H1 (cell line): ENCODE measurements at regions of chr5 and their contacts with region 1.

Region 1: GRCh38 chr5:173163219-173163618 is 18.9 kb downstream of the BNIP1 start:
- DNase-seq: no peak
- H3K4me3 ChIP-seq: no peak overlapping the region
- H3K27ac ChIP-seq: no peak overlapping the region
- H3K4me1 ChIP-seq: no peaks in the 10 kb centered on the region
- H3K27me3 ChIP-seq: no peaks in the 10 kb centered on the region
- CTCF ChIP-seq: peak in 2 of 3 experiments; percentile 9 to 28; a peak in 2 of 4 replicates
- EP300 ChIP-seq: no peak
- POLR2A ChIP-seq: no peak
- RAD21 ChIP-seq: peak in 1 of 2 experiments; percentile 42; a peak in 2 of 4 replicates

Region 2: DNA sequence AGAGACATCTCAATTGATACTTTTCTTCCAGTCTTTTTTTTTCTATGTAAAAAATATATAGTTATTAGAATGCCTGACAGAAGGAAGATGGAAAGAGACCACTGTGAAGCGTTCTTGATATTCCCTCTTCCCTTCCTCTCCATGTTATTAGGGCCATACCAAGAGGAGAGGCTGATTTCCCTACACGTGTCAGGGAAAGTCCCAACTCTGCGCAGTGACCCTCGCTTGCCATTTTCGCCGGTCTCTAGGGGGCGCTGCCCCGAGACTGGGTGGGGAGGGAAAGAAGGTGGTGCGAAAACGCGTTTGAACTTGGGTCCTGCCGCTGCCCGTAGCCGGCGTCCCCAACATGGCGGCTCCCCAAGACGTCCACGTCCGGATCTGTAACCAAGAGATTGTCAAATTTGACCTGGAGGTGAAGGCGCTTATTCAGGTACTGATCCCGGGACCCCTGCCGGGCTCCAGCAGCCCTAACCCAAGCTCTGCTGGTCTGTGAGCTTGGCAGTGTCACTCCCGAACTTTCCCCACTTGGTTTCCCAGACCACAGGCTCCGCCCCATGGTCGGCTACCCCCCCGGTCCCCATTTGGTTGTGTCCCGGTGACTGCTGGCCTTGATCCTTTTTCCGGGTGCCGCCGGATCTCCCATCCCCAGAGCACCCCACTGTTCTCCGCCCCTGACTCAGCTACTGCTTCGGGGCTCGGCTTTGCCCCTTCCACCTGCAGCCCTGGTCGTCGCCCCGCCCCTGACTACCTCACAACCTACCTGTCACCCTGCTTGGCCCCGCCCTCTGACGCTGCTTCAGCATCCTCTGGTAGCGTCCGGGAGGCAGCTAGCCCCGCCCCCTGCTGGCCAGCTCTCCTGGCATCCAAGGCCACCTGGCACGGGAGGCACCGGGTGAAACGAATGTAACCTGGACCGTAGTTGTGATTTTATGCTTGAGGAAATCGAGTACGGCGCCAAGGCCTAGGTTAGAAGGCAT is 18.7 kb before region 1 on chr5 and contains the start of gene BNIP1:
- CTCF ChIA-PET with region 1: interaction called, 15 read pairs
- POLR2A ChIA-PET with region 1: no interaction called
- DNase-seq: peak; percentile 87 to 99
- H3K4me3 ChIP-seq: peak within 1 kb of the TSS; percentile 58 to 97 (median 94)
- H3K27ac ChIP-seq: peak within 1 kb of the TSS; percentile 60
- H3K4me1 ChIP-seq: peaks cover 4 to 9% (median 6%) of the 10 kb centered on the region in 4 experiments; a peak in 6 of 7 replicates
- H3K27me3 ChIP-seq: no peaks in the 10 kb centered on the region
- CTCF ChIP-seq: peak; percentile 88 to 98 (median 92)
- EP300 ChIP-seq: peak in 1 of 2 experiments; percentile 89; a peak in 2 of 3 replicates
- POLR2A ChIP-seq: peak in 1 of 2 experiments; percentile 63; a peak in 2 of 3 replicates
- RAD21 ChIP-seq: peak; percentile 58 to 66
- total RNA-seq, gene BNIP1: 11.8 and 13.5 TPM in 2 replicates

Region 3: GRCh38 chr5:173187054-173187789 is 24.0 kb after region 1 on chr5:
- CTCF ChIA-PET with region 1: interaction called, 44 read pairs
- POLR2A ChIA-PET with region 1: no interaction called
- DNase-seq: peak; percentile 19 to 59
- H3K4me3 ChIP-seq: no peak overlapping the region
- H3K27ac ChIP-seq: no peak overlapping the region
- H3K4me1 ChIP-seq: peaks cover 0 to 4% (median 0%) of the 10 kb centered on the region in 4 experiments; a peak in 1 of 7 replicates
- H3K27me3 ChIP-seq: no peaks in the 10 kb centered on the region
- CTCF ChIP-seq: peak; percentile 43 to 46 (median 43)
- EP300 ChIP-seq: no peak
- POLR2A ChIP-seq: no peak
- RAD21 ChIP-seq: peak; percentile 12 to 36; a peak in 2 of 4 replicates

Region 4: GRCh38 chr5:173201636-173202276 is 38.5 kb after region 1 on chr5:
- CTCF ChIA-PET with region 1: interaction called, 29 read pairs
- POLR2A ChIA-PET with region 1: no interaction called
- DNase-seq: peak in 1 of 2 experiments; percentile 17
- H3K4me3 ChIP-seq: no peak overlapping the region
- H3K27ac ChIP-seq: no peak overlapping the region
- H3K4me1 ChIP-seq: peaks cover 0 to 5% (median 2%) of the 10 kb centered on the region in 4 experiments; a peak in 3 of 7 replicates
- H3K27me3 ChIP-seq: peaks cover 0 to 2% (median 0%) of the 10 kb centered on the region in 4 experiments; a peak in 1 of 7 replicates
- CTCF ChIP-seq: no peak
- EP300 ChIP-seq: no peak
- POLR2A ChIP-seq: no peak
- RAD21 ChIP-seq: no peak

Region 5: GRCh38 chr5:173232499-173233346 is 69.5 kb after region 1 on chr5:
- CTCF ChIA-PET with region 1: interaction called, 15 read pairs
- POLR2A ChIA-PET with region 1: interaction called, 5 read pairs
- DNase-seq: no peak
- H3K4me3 ChIP-seq: peak overlapping the region in 1 of 4 experiments; percentile 36; a peak in 2 of 8 replicates
- H3K27ac ChIP-seq: no peak overlapping the region
- H3K4me1 ChIP-seq: peaks cover under 1 to 53% (median 28%) of the 10 kb centered on the region in 4 experiments
- H3K27me3 ChIP-seq: peaks cover 95 to 100% (median 100%) of the 10 kb centered on the region in 4 experiments
- CTCF ChIP-seq: no peak
- EP300 ChIP-seq: no peak
- POLR2A ChIP-seq: no peak
- RAD21 ChIP-seq: no peak

Region 6: GRCh38 chr5:173283318-173284288 is 120.4 kb after region 1 on chr5:
- CTCF ChIA-PET with region 1: interaction called, 13 read pairs
- POLR2A ChIA-PET with region 1: interaction called, 3 read pairs
- DNase-seq: peak; percentile 50 to 91
- H3K4me3 ChIP-seq: peak overlapping the region in 2 of 4 experiments; percentile 10 to 47; a peak in 3 of 8 replicates
- H3K27ac ChIP-seq: no peak overlapping the region
- H3K4me1 ChIP-seq: peaks cover 0 to 4% (median 0%) of the 10 kb centered on the region in 4 experiments; a peak in 1 of 7 replicates
- H3K27me3 ChIP-seq: peaks cover 3 to 20% (median 18%) of the 10 kb centered on the region in 4 experiments
- CTCF ChIP-seq: peak; percentile 79 to 93 (median 88)
- EP300 ChIP-seq: no peak
- POLR2A ChIP-seq: no peak
- RAD21 ChIP-seq: peak; percentile 77 to 86